ENCODE measurements at regions of chr1 and their contacts with region 1.

Region 1: GRCh38 chr1:225746361-225747179 is 31.1 kb upstream of the SRP9 start:
- DNase-seq: peak; percentile 97
- H3K4me3 ChIP-seq: peak overlapping the region; percentile 38
- H3K27ac ChIP-seq: peak overlapping the region; percentile 62
- H3K4me1 ChIP-seq: peaks cover 18% of the 10 kb centered on the region
- H3K27me3 ChIP-seq: no peaks in the 10 kb centered on the region
- CTCF ChIP-seq: peak; percentile 28

Region 2: DNA sequence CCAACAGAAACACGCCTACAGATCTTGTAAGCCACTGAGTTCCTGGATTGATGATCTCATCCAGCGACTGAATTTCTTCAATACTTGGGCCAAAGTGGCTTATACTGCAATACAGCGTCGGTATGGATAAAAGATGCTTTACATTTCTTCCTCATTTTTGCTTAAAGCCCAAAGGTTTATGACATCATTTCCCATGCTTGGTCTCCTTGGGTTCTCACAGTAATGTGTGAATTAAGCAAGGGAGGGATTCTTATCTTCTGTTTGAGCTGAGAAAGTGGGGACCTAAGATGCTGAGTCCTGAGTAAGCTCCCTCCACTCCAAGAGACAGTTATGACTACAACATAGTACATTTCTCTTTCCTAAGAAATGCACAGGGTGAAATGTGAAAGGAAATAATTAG is 358.2 kb before region 1 on chr1:
- CTCF ChIA-PET with region 1: no interaction called
- POLR2A ChIA-PET with region 1: no interaction called
- intact Hi-C with region 1: no loop called
- DNase-seq: no peak
- H3K4me3 ChIP-seq: no peak overlapping the region
- H3K27ac ChIP-seq: no peak overlapping the region
- H3K4me1 ChIP-seq: no peaks in the 10 kb centered on the region
- H3K27me3 ChIP-seq: no peaks in the 10 kb centered on the region
- CTCF ChIP-seq: no peak

Region 3: DNA sequence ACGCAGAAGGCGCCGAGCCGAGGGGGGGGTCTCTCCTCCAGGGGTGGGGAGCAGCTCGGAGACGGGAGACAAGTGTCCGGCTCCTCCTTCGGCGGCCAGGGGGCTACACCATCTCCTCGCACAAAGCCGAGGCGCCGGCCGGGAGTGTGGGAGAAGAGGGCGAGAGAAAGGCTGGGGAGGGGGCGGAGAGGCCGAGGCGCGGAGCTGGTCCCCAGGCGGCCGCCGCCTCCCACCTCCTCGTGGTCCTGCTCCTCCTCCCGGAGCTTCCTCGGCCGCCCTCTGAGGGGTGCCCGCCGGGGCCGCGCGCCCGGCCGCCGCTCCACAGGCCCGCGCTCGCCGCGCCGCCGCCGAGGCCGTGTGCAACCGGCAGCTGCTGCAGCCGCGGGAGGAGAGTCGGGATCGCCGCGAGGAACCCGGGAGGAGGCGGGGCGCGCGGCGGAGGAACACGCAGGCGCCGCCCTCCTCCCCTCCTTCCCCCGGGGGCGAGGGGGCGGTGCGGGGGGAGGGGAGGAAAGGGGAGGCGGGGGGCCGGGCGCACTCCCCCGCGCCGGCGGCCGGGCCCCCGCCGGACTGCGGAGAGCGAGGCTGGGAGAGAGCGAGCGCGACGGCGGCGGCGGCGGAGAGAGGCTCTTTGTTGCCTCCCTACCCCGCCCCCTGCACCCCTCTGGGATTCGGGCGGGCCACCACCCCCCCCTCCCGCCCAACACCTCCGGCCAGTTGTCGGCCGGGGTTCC is 93.7 kb before region 1 on chr1 and contains the start of gene ENAH:
- CTCF ChIA-PET with region 1: interaction called, 3 read pairs
- POLR2A ChIA-PET with region 1: no interaction called
- intact Hi-C with region 1: loop called (anchors 1 kb)
- DNase-seq: peak; percentile 92
- H3K4me3 ChIP-seq: peak within 1 kb of the TSS; percentile 85
- H3K27ac ChIP-seq: peak within 1 kb of the TSS; percentile 96
- H3K4me1 ChIP-seq: peaks cover 41% of the 10 kb centered on the region
- H3K27me3 ChIP-seq: no peaks in the 10 kb centered on the region
- CTCF ChIP-seq: no peak
- total RNA-seq, gene ENAH: 171 and 186 TPM in 2 replicates